ENCODE measurements at regions of chr18 and their contacts with region 1.

Region 1: GRCh38 chr18:6543330-6543908 is 128.7 kb upstream of the L3MBTL4 start:
- DNase-seq: no peak
- ATAC-seq: no peak
- H3K4me3 ChIP-seq: no peak overlapping the region
- H3K27ac ChIP-seq: no peak overlapping the region
- H3K4me1 ChIP-seq: no peaks in the 10 kb centered on the region
- H3K27me3 ChIP-seq: no peaks in the 10 kb centered on the region
- CTCF ChIP-seq: peak in 2 of 3 experiments; percentile 3 to 28; a peak in 1 of 6 replicates
- POLR2A ChIP-seq: no peak
- RAD21 ChIP-seq: no peak

Region 2: GRCh38 chr18:6714010-6714409 is 170.6 kb after region 1 on chr18:
- CTCF ChIA-PET with region 1: no interaction called
- POLR2A ChIA-PET with region 1: no interaction called
- RAD21 ChIA-PET with region 1: no interaction called
- intact Hi-C with region 1: no loop called
- DNase-seq: no peak
- ATAC-seq: no peak
- H3K4me3 ChIP-seq: no peak overlapping the region
- H3K27ac ChIP-seq: no peak overlapping the region
- H3K4me1 ChIP-seq: no peaks in the 10 kb centered on the region
- H3K27me3 ChIP-seq: no peaks in the 10 kb centered on the region
- CTCF ChIP-seq: no peak
- POLR2A ChIP-seq: no peak
- RAD21 ChIP-seq: no peak

Region 3: GRCh38 chr18:6837904-6838303 is 294.5 kb after region 1 on chr18:
- CTCF ChIA-PET with region 1: no interaction called
- POLR2A ChIA-PET with region 1: no interaction called
- RAD21 ChIA-PET with region 1: no interaction called
- intact Hi-C with region 1: no loop called
- DNase-seq: no peak
- ATAC-seq: no peak
- H3K4me3 ChIP-seq: no peak overlapping the region
- H3K27ac ChIP-seq: no peak overlapping the region
- H3K4me1 ChIP-seq: no peaks in the 10 kb centered on the region
- H3K27me3 ChIP-seq: no peaks in the 10 kb centered on the region
- CTCF ChIP-seq: no peak
- POLR2A ChIP-seq: no peak
- RAD21 ChIP-seq: no peak

Region 4: GRCh38 chr18:6885992-6886796 is 342.8 kb after region 1 on chr18:
- CTCF ChIA-PET with region 1: interaction called, 3 read pairs
- POLR2A ChIA-PET with region 1: no interaction called
- RAD21 ChIA-PET with region 1: no interaction called
- intact Hi-C with region 1: loop called (anchors 5 kb)
- DNase-seq: no peak
- ATAC-seq: no peak
- H3K4me3 ChIP-seq: no peak overlapping the region
- H3K27ac ChIP-seq: no peak overlapping the region
- H3K4me1 ChIP-seq: no peaks in the 10 kb centered on the region
- H3K27me3 ChIP-seq: no peaks in the 10 kb centered on the region
- CTCF ChIP-seq: peak in 2 of 3 experiments; percentile 31 to 49; a peak in 2 of 6 replicates
- POLR2A ChIP-seq: no peak
- RAD21 ChIP-seq: peak; percentile 32; the same call in 1 of the 2 replicates

Measured in HCT116 (cell line).